PC-3 (cell line): ENCODE measurements at regions of chr11 and their contacts with region 1.

Region 1: DNA sequence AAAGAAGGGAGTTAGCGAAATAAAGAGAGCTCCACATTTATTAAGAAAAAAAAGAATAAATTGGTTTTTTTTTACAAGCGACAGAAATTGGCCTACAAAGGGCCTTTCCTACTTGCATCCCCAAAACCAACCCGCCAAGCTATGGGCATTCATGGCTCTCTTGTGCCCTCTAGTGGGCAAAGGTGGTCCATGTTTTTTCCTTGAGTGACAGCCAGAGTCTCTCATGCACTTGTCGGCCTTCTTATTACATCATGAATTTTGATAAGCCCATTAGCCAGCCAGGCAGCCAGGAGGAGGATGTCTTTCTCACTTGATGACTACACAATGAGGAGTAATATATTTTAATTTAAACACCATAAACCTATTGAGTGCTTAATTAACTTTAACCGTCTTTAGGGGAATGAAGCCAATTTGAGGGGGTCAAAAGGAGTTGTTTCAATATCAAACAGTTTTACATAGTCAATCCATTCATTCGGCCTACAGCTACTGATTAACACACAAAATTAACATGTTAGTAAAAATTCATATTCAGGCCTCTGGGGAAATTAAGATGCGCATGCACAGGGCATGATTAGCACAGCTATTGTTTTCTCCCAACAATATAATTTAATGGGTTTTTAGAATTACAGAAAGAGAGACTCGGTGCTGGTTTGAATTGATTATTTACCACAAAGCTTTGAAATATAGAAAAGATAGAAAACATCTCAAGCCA is 85.5 kb downstream of the RCN1 start:
- DNase-seq: peak; percentile 91
- ATAC-seq: peak; percentile 67
- H3K4me3 ChIP-seq: no peak overlapping the region
- H3K27ac ChIP-seq: no peak overlapping the region
- H3K4me1 ChIP-seq: no peaks in the 10 kb centered on the region
- H3K27me3 ChIP-seq: peaks cover 27% of the 10 kb centered on the region
- CTCF ChIP-seq: peak; percentile 84

Region 2: DNA sequence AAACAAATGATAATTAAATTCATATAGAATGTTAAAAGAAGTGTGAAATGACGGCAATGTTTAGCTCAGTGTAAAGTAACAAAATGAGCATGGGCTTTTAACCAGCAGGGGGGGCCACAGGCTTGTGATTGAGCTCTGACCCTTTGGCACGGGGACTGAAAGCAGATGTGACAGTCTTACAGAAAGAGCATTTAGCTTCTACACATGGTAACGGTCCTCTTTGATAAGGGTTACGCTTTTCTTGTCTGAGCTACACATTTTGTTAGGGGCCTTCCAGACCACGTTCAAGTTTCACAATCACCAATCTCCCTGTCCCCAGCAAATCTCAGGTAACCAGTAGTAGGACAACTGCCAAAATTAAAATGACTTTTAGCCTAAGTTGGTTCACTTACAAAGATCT is 1069.3 kb before region 1 on chr11:
- CTCF ChIA-PET with region 1: no interaction called
- POLR2A ChIA-PET with region 1: no interaction called
- intact Hi-C with region 1: loop called (anchors 2 kb)
- DNase-seq: peak; percentile 56
- ATAC-seq: peak; percentile 55
- H3K4me3 ChIP-seq: no peak overlapping the region
- H3K27ac ChIP-seq: no peak overlapping the region
- H3K4me1 ChIP-seq: no peaks in the 10 kb centered on the region
- H3K27me3 ChIP-seq: peaks cover 37% of the 10 kb centered on the region
- CTCF ChIP-seq: peak; percentile 77

Region 3: GRCh38 chr11:31487848-31488247 is 688.5 kb before region 1 on chr11:
- CTCF ChIA-PET with region 1: no interaction called
- POLR2A ChIA-PET with region 1: no interaction called
- intact Hi-C with region 1: loop called (anchors 10 kb)
- DNase-seq: peak; percentile 70
- ATAC-seq: peak; percentile 59
- H3K4me3 ChIP-seq: no peak overlapping the region
- H3K27ac ChIP-seq: no peak overlapping the region
- H3K4me1 ChIP-seq: no peaks in the 10 kb centered on the region
- H3K27me3 ChIP-seq: no peaks in the 10 kb centered on the region
- CTCF ChIP-seq: peak; percentile 72

Region 4: GRCh38 chr11:32105871-32106560 is 70.4 kb before region 1 on chr11:
- CTCF ChIA-PET with region 1: interaction called, 6 read pairs
- POLR2A ChIA-PET with region 1: no interaction called
- intact Hi-C with region 1: loop called (anchors 5 kb)
- DNase-seq: no peak
- ATAC-seq: no peak
- H3K4me3 ChIP-seq: no peak overlapping the region
- H3K27ac ChIP-seq: no peak overlapping the region
- H3K4me1 ChIP-seq: peaks cover 34% of the 10 kb centered on the region
- H3K27me3 ChIP-seq: no peaks in the 10 kb centered on the region
- CTCF ChIP-seq: no peak

Region 5: GRCh38 chr11:32231905-32232493 is 55.6 kb after region 1 on chr11:
- CTCF ChIA-PET with region 1: no interaction called
- POLR2A ChIA-PET with region 1: no interaction called
- intact Hi-C with region 1: no loop called
- DNase-seq: peak; percentile 62
- ATAC-seq: peak; percentile 86
- H3K4me3 ChIP-seq: no peak overlapping the region
- H3K27ac ChIP-seq: no peak overlapping the region
- H3K4me1 ChIP-seq: peaks cover 3% of the 10 kb centered on the region; the same call in 1 of the 2 replicates
- H3K27me3 ChIP-seq: peaks cover 26% of the 10 kb centered on the region
- CTCF ChIP-seq: peak; percentile 84

Region 6: DNA sequence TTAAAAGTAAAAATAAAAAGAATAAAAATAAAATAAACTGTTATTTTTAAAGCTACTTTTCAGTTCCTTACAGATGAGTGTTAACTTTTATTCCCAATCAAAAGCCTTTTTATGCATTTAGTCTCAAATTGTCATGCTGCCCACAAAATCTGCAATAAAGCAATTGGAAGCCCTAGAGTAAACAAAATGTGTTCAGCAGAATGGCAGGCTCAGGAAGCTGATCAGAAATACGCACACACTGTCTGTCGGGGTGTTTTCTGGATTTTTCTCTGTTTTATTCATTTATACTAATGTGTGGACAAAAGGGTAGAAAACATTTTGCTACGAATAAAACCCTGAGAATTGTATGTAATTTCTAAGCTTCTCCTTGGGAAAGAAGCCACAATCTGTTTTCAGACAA is 77.3 kb after region 1 on chr11:
- CTCF ChIA-PET with region 1: no interaction called
- POLR2A ChIA-PET with region 1: no interaction called
- intact Hi-C with region 1: no loop called
- DNase-seq: no peak
- ATAC-seq: no peak
- H3K4me3 ChIP-seq: no peak overlapping the region
- H3K27ac ChIP-seq: no peak overlapping the region
- H3K4me1 ChIP-seq: no peaks in the 10 kb centered on the region
- H3K27me3 ChIP-seq: peaks cover 86% of the 10 kb centered on the region
- CTCF ChIP-seq: no peak